Dorsolateral prefrontal cortex (tissue), 120 donors: ENCODE measurements at regions of chr1 and their contacts with region 1.

Region 1: DNA sequence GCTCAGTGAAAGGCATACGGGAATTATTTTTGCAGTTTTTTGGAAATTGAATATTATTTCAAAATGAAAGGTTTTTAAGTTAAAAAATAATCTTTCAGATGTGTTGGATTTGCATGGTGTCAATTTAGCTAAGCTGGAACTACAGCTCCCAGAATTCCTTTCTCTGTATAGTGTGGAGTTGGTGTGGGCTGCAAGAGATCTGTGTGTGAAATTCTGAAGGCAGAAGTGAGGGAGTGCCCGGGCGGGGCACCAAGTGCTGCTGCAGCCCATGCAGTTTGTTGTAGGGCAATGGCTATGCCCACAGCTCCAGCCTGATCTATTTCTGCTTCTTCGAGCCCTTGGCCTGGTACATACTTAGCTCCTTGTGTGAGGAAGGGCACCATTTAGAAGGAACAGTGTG is 60.5 kb upstream of the CSF1 start:
- DNase-seq: no peak
- H3K4me3 ChIP-seq: no peak overlapping the region
- H3K27ac ChIP-seq: peak overlapping the region in 2 of 59 donors; percentile 9 to 21
- H3K27me3 ChIP-seq: no peaks in the 10 kb centered on the region
- CTCF ChIP-seq: no peak

Region 2: GRCh38 chr1:109438798-109439297 is 411.3 kb before region 1 on chr1:
- intact Hi-C with region 1: no loop called
- DNase-seq: no peak
- H3K4me3 ChIP-seq: no peak overlapping the region
- H3K27ac ChIP-seq: no peak overlapping the region
- H3K27me3 ChIP-seq: peaks cover 0 to 16% (median 0%) of the 10 kb centered on the region in 45 donors
- CTCF ChIP-seq: no peak

Region 3: GRCh38 chr1:109816175-109816811 is 33.9 kb before region 1 on chr1:
- intact Hi-C with region 1: loop called in 1 of 2 experiments (anchors 5 kb)
- DNase-seq: no peak
- H3K4me3 ChIP-seq: no peak overlapping the region
- H3K27ac ChIP-seq: peak overlapping the region in 39 of 59 donors; percentile 1 to 95 (median 71)
- H3K27me3 ChIP-seq: no peaks in the 10 kb centered on the region
- CTCF ChIP-seq: no peak

Region 4: GRCh38 chr1:109923131-109923945 is 73.1 kb after region 1 on chr1:
- intact Hi-C with region 1: no loop called
- DNase-seq: peak in 1 of 10 donors; percentile 26
- H3K4me3 ChIP-seq: peak overlapping the region in 2 of 59 donors; percentile 2 to 26
- H3K27ac ChIP-seq: peak overlapping the region in 23 of 59 donors; percentile 3 to 66 (median 45)
- H3K27me3 ChIP-seq: no peaks in the 10 kb centered on the region
- CTCF ChIP-seq: peak in 47 of 56 donors; percentile 1 to 56 (median 41)